CD4-positive, alpha-beta T cell (primary cell): ENCODE measurements at regions of chr10 and their contacts with region 1.

Region 1: GRCh38 chr10:30413996-30414576 is 19.9 kb upstream of the MAP3K8 start:
- DNase-seq: peak in 4 of 14 experiments; percentile 40 to 78 (median 72)
- ATAC-seq: peak; percentile 64
- H3K4me3 ChIP-seq: no peak overlapping the region
- H3K4me3 Mint-ChIP-seq: no peak overlapping the region
- H3K27ac ChIP-seq: no peak overlapping the region
- H3K27ac Mint-ChIP-seq: no peak overlapping the region
- H3K4me1 ChIP-seq: peaks cover 11% of the 10 kb centered on the region
- H3K4me1 Mint-ChIP-seq: peaks cover 13% of the 10 kb centered on the region
- H3K27me3 ChIP-seq: no peaks in the 10 kb centered on the region
- H3K27me3 Mint-ChIP-seq: no peaks in the 10 kb centered on the region
- CTCF ChIP-seq: peak; percentile 81

Region 2: GRCh38 chr10:30392564-30392990 is 21.5 kb before region 1 on chr10:
- CTCF ChIA-PET with region 1: interaction called, 3 read pairs
- POLR2A ChIA-PET with region 1: no interaction called
- intact Hi-C with region 1: loop called (anchors 2 kb)
- DNase-seq: peak; percentile 59 to 86 (median 69)
- ATAC-seq: peak; percentile 100
- H3K4me3 ChIP-seq: no peak overlapping the region
- H3K4me3 Mint-ChIP-seq: no peak overlapping the region
- H3K27ac ChIP-seq: no peak overlapping the region
- H3K27ac Mint-ChIP-seq: no peak overlapping the region
- H3K4me1 ChIP-seq: peaks cover 7% of the 10 kb centered on the region
- H3K4me1 Mint-ChIP-seq: peaks cover 3% of the 10 kb centered on the region
- H3K27me3 ChIP-seq: peaks cover 0 to 2% of the 10 kb centered on the region in 2 experiments
- H3K27me3 Mint-ChIP-seq: peaks cover 12% of the 10 kb centered on the region
- CTCF ChIP-seq: peak; percentile 88